Aorta (tissue), 5 donors: ENCODE measurements at regions of chr3 and their contacts with region 1.

Region 1: GRCh38 chr3:101573449-101574387 is at the start of gene PCNP:
- DNase-seq: peak; percentile 99 to 100
- ATAC-seq: peak; percentile 98
- H3K4me3 ChIP-seq: peak within 1 kb of the TSS; percentile 83 to 87
- H3K27ac ChIP-seq: peak within 1 kb of the TSS; percentile 86 to 97
- H3K4me1 ChIP-seq: peaks cover 2% of the 10 kb centered on the region in 2 donors
- H3K27me3 ChIP-seq: no peaks in the 10 kb centered on the region
- total RNA-seq, gene PCNP: 161 to 176 TPM

Region 2: GRCh38 chr3:101512646-101513418 is 60.9 kb before region 1 on chr3 and contains the start of gene SENP7:
- intact Hi-C with region 1: loop called in 1 of 2 experiments (anchors 5 kb)
- DNase-seq: peak; percentile 92 to 95
- ATAC-seq: peak; percentile 89
- H3K4me3 ChIP-seq: peak within 1 kb of the TSS; percentile 90 to 96
- H3K27ac ChIP-seq: peak within 1 kb of the TSS; percentile 37 to 77
- H3K4me1 ChIP-seq: no peaks in the 10 kb centered on the region
- H3K27me3 ChIP-seq: no peaks in the 10 kb centered on the region
- total RNA-seq, gene SENP7: 25.6 to 32.4 TPM

Region 3: DNA sequence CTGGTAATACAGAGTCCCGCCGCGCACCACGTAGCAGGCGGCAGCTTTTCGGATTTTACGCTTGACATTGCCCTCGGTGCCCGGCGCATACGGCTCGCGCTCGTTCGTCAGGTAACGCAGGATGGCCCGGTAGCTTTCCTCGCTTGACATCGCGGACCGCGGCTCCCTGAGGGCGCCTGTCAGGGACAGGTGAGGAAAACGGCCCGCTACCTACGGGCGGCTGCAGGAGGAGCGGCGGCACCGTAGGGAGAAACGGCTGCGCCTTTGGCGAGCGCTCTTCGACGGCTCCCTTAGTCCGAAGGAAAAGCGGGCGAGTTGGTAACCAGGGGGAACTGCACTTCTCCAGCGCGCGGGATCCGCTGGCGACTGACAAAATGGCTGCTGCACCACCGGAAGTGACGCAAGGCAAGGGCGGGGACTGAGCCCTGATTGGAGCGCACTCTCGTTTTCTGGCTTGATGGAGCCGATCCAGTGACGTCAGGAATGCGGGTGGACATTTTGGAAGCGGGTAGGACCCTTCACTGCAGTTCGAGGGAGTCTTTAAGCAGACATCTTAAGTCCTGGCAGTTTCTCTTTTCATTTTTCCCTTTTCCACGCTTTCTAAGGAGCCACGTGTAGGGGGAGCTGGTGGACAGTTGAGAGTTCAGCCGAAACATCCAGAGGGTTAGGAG is 103.2 kb after region 1 on chr3 and contains the start of gene ZBTB11:
- intact Hi-C with region 1: loop called (anchors 2 to 10 kb)
- DNase-seq: peak; percentile 100
- ATAC-seq: peak; percentile 94
- H3K4me3 ChIP-seq: peak within 1 kb of the TSS; percentile 42 to 74
- H3K27ac ChIP-seq: peak within 1 kb of the TSS; percentile 2 to 82
- H3K4me1 ChIP-seq: no peaks in the 10 kb centered on the region
- H3K27me3 ChIP-seq: no peaks in the 10 kb centered on the region
- total RNA-seq, gene ZBTB11: 15.3 to 18.5 TPM